GM18951 (cell line): ENCODE measurements at regions of chr1 and their contacts with region 1.

Region 1: DNA sequence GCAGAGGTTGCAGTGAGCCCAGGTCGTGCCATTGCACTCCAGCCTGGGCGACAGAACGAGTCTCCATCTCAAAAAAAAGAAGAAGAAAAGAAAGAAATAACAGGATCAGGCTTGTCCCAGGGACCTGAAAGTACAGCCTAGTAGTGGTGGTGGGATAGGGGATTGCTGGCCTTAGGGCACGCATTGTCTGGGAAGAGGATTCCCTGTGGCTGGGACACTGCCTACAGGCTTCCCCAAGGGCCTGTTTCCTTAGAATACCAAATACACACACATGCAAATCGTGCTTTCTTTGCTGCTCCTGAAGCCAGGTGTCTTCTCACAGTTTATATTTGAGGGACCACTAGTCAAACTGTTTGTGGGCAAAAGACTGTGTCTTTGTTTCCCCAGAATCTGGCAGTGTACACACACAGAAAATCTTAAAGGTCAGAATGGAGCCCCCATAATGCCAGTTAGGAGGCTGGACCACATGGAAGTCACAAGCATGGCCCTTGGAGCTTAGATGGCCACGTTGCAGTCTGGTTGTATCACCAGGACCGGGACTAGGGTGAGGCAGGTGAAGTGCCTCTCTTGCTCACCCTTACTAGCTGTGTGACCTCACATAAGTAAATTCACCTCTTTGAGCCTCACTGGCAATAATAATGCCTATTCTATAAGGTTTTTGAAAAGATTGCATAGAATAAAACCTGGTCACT is 12.7 kb upstream of the ASAP3 start:
- POLR2A ChIP-seq: no peak

Region 2: GRCh38 chr1:23444104-23444533 is 52.5 kb before region 1 on chr1:
- in situ Hi-C with region 1: no loop called
- POLR2A ChIP-seq: no peak

Region 3: DNA sequence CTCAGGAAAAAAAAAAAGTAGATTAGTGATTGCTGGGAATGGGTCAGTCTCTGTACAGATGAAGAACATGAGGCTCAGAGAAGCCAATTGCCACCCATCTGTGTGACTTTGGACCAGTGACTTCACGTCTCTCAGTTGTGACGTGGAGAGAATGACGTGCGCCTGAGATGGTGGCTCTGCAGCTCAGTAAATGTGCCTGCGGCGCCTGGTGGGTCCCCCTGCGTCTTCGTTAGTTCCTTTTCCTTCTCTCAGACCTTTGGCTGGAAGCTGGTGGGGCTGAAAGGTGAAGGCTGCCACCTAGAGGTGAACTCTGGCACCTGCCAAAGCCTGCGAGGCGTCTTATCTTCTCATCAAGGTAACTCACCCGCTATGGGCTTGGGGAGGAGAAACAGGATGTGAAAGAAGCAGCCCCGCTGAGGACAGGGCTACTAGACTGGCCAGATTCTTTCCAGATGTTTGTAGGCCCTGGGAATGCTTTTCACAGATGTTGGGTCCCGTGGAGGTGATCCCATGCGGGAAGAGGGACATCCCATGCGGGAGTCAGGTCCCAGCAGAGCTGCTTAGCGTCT is 43.1 kb after region 1 on chr1:
- in situ Hi-C with region 1: loop called (anchors 5 kb)
- POLR2A ChIP-seq: no peak